Activated naive CD4-positive, alpha-beta T cell treated with anti-CD3 and anti-CD28 coated beads for 36 hours (primary cell): ENCODE measurements at regions of chr1 and their contacts with region 1.

Region 1: DNA sequence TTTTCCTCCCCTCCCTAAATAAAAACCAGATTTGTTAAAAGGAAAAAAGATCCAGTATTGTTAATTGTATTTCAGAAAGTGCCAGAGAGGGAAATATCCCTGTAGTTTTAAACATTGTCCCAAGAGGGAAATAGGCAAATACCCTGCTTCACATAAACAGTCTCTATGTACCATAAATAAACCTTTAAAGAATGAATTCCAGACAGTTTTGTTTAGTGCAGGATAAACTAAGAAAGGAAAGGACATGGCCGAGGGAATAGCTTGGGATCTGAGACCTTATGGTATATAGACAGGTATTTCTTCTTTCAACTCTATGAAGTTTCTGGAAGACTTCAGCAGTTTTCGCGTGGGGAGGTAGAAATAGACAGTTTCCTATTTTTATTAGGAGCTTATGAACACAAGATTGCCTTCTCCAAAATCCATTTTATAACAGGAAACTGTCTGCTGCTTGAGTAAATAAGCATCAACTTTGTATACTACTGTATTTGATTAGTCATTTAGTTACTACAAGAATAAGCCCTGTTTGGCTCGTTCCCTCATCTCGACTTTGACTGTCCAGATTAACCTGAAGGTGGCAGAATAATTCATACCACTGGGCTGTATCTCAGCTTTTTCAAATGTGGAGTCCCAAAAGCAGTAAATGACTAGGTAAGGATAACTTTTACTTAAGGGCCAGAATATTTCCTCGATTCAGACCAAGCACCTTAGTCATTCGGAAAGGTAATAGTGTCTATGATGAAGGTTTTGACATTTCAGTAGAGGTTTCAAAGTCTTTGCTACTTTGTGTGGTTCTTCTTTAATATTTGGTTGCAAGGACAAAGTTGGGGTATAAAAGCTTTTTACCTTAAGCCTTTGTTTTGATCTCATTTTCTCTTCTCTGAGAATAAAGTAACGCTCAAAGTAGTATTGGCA is 177.5 kb downstream of the VPS13D start:
- DNase-seq: peak; percentile 46
- H3K4me3 Mint-ChIP-seq: no peak overlapping the region
- H3K27ac Mint-ChIP-seq: no peak overlapping the region
- H3K4me1 Mint-ChIP-seq: peaks cover 38% of the 10 kb centered on the region
- H3K27me3 Mint-ChIP-seq: no peaks in the 10 kb centered on the region

Region 2: DNA sequence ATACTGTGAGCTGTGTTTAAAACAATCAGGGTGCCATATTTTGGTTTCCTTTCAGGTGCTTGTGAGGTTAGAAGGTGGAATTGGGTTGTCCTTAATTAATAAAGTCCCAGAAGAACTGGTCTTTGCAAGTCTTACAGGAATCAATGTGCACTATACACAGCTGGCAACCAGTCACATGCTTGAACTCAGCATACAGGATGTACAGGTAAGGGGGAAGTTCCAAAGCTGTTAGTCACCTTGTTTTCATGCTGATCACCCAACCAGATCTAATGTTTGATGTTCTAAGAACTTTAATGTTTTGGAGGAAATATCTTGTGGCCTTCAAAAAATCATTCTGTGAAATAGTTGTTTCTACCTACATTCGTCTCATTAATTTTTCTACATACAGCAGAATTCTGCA is 21.2 kb before region 1 on chr1:
- CTCF ChIA-PET with region 1: no interaction called
- intact Hi-C with region 1: loop called (anchors 2 kb)
- DNase-seq: peak; percentile 68
- H3K4me3 Mint-ChIP-seq: no peak overlapping the region
- H3K27ac Mint-ChIP-seq: peak overlapping the region; percentile 80
- H3K4me1 Mint-ChIP-seq: peaks cover 43% of the 10 kb centered on the region
- H3K27me3 Mint-ChIP-seq: no peaks in the 10 kb centered on the region

Region 3: GRCh38 chr1:12511516-12512468 is 104.5 kb after region 1 on chr1:
- CTCF ChIA-PET with region 1: no interaction called
- intact Hi-C with region 1: loop called (anchors 2 kb)
- DNase-seq: no peak
- H3K4me3 Mint-ChIP-seq: peak overlapping the region; percentile 80
- H3K27ac Mint-ChIP-seq: peak overlapping the region; percentile 97
- H3K4me1 Mint-ChIP-seq: peaks cover 61% of the 10 kb centered on the region
- H3K27me3 Mint-ChIP-seq: no peaks in the 10 kb centered on the region

Region 4: GRCh38 chr1:12604114-12604874 is 197.0 kb after region 1 on chr1:
- CTCF ChIA-PET with region 1: no interaction called
- intact Hi-C with region 1: loop called (anchors 5 kb)
- DNase-seq: peak; percentile 90
- H3K4me3 Mint-ChIP-seq: peak overlapping the region; percentile 10
- H3K27ac Mint-ChIP-seq: peak overlapping the region; percentile 79
- H3K4me1 Mint-ChIP-seq: peaks cover 71% of the 10 kb centered on the region
- H3K27me3 Mint-ChIP-seq: no peaks in the 10 kb centered on the region